CD4-positive, alpha-beta memory T cell (primary cell): ENCODE measurements at regions of chr12 and their contacts with region 1.

Region 1: DNA sequence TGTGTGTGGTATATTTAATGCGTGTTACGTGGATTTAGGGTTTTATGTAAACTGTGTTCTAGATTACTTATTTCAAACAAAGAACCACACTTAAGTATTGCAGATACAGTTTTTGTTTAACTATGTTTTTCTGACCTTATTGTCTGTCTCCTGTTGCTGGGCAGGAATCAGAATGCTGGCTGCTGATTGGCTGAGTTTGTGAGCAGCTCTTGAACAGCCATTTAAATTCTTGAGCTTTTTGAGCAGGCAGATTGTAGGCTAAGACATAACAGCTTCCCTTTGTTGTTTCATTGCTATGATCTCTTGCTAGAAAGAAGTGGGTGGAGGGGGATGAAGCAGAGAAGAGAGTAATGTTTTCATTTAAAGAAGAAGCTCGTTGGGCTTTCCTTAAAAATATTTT is 52.2 kb downstream of the ATF7IP start:
- DNase-seq: peak; percentile 70 to 86 (median 79)
- H3K4me3 ChIP-seq: no peak overlapping the region
- H3K4me3 Mint-ChIP-seq: peak overlapping the region; percentile 72 to 88 (median 84)
- H3K27ac ChIP-seq: peak overlapping the region; percentile 34
- H3K27ac Mint-ChIP-seq: peak overlapping the region; percentile 66 to 95 (median 86)
- H3K4me1 ChIP-seq: peaks cover 73% of the 10 kb centered on the region
- H3K4me1 Mint-ChIP-seq: peaks cover 46 to 73% (median 59%) of the 10 kb centered on the region in 4 donors
- H3K27me3 ChIP-seq: no peaks in the 10 kb centered on the region
- H3K27me3 Mint-ChIP-seq: no peaks in the 10 kb centered on the region

Region 2: GRCh38 chr12:14185427-14186192 is 232.1 kb before region 1 on chr12:
- CTCF ChIA-PET with region 1: no interaction called
- POLR2A ChIA-PET with region 1: no interaction called
- intact Hi-C with region 1: loop called (anchors 2 kb)
- DNase-seq: peak in 4 of 5 donors; percentile 15 to 27 (median 24)
- H3K4me3 ChIP-seq: no peak overlapping the region
- H3K4me3 Mint-ChIP-seq: peak overlapping the region in 1 of 8 donors; percentile 32
- H3K27ac ChIP-seq: no peak overlapping the region
- H3K27ac Mint-ChIP-seq: no peak overlapping the region
- H3K4me1 ChIP-seq: no peaks in the 10 kb centered on the region
- H3K4me1 Mint-ChIP-seq: peaks cover 0 to 2% (median 0%) of the 10 kb centered on the region in 4 donors
- H3K27me3 ChIP-seq: no peaks in the 10 kb centered on the region
- H3K27me3 Mint-ChIP-seq: peaks cover 5 to 6% of the 10 kb centered on the region in 2 donors

Region 3: GRCh38 chr12:14394317-14395073 is 23.2 kb before region 1 on chr12:
- CTCF ChIA-PET with region 1: interaction called, 30 read pairs
- POLR2A ChIA-PET with region 1: interaction called, 22 read pairs
- intact Hi-C with region 1: no loop called
- DNase-seq: peak; percentile 74 to 84 (median 75)
- H3K4me3 ChIP-seq: peak overlapping the region in 1 of 2 donors; percentile 25
- H3K4me3 Mint-ChIP-seq: peak overlapping the region; percentile 78 to 89 (median 83)
- H3K27ac ChIP-seq: peak overlapping the region; percentile 73
- H3K27ac Mint-ChIP-seq: peak overlapping the region; percentile 93 to 98 (median 97)
- H3K4me1 ChIP-seq: peaks cover 98% of the 10 kb centered on the region
- H3K4me1 Mint-ChIP-seq: peaks cover 55 to 94% (median 75%) of the 10 kb centered on the region in 4 donors
- H3K27me3 ChIP-seq: no peaks in the 10 kb centered on the region
- H3K27me3 Mint-ChIP-seq: no peaks in the 10 kb centered on the region

Region 4: GRCh38 chr12:14403711-14404196 is 14.0 kb before region 1 on chr12:
- CTCF ChIA-PET with region 1: interaction called, 14 read pairs
- POLR2A ChIA-PET with region 1: interaction called, 44 read pairs
- intact Hi-C with region 1: no loop called
- DNase-seq: peak; percentile 55 to 72 (median 66)
- H3K4me3 ChIP-seq: peak overlapping the region in 1 of 2 donors; percentile 17
- H3K4me3 Mint-ChIP-seq: peak overlapping the region; percentile 40 to 88 (median 78)
- H3K27ac ChIP-seq: peak overlapping the region; percentile 33
- H3K27ac Mint-ChIP-seq: peak overlapping the region; percentile 86 to 98 (median 93)
- H3K4me1 ChIP-seq: peaks cover 98% of the 10 kb centered on the region
- H3K4me1 Mint-ChIP-seq: peaks cover 47 to 82% (median 68%) of the 10 kb centered on the region in 4 donors
- H3K27me3 ChIP-seq: no peaks in the 10 kb centered on the region
- H3K27me3 Mint-ChIP-seq: no peaks in the 10 kb centered on the region

Region 5: GRCh38 chr12:14618983-14619382 is 201.3 kb after region 1 on chr12:
- CTCF ChIA-PET with region 1: no interaction called
- POLR2A ChIA-PET with region 1: no interaction called
- intact Hi-C with region 1: loop called (anchors 5 kb)
- DNase-seq: peak in 2 of 5 donors; percentile 16 to 22
- H3K4me3 ChIP-seq: no peak overlapping the region
- H3K4me3 Mint-ChIP-seq: no peak overlapping the region
- H3K27ac ChIP-seq: no peak overlapping the region
- H3K27ac Mint-ChIP-seq: no peak overlapping the region
- H3K4me1 ChIP-seq: no peaks in the 10 kb centered on the region
- H3K4me1 Mint-ChIP-seq: peaks cover 0 to 2% (median 0%) of the 10 kb centered on the region in 4 donors
- H3K27me3 ChIP-seq: no peaks in the 10 kb centered on the region
- H3K27me3 Mint-ChIP-seq: peaks cover 20 to 28% of the 10 kb centered on the region in 2 donors

Region 6: GRCh38 chr12:14782756-14783155 is 365.0 kb after region 1 on chr12:
- CTCF ChIA-PET with region 1: no interaction called
- POLR2A ChIA-PET with region 1: no interaction called
- intact Hi-C with region 1: no loop called
- DNase-seq: no peak
- H3K4me3 ChIP-seq: no peak overlapping the region
- H3K4me3 Mint-ChIP-seq: no peak overlapping the region
- H3K27ac ChIP-seq: no peak overlapping the region
- H3K27ac Mint-ChIP-seq: peak overlapping the region in 1 of 7 donors; percentile 30
- H3K4me1 ChIP-seq: no peaks in the 10 kb centered on the region
- H3K4me1 Mint-ChIP-seq: peaks cover 0 to 5% (median 3%) of the 10 kb centered on the region in 4 donors
- H3K27me3 ChIP-seq: no peaks in the 10 kb centered on the region
- H3K27me3 Mint-ChIP-seq: no peaks in the 10 kb centered on the region